Endothelial cell of umbilical vein (primary cell): ENCODE measurements at regions of chr3 and their contacts with region 1.

Region 1: GRCh38 chr3:113626503-113627371 is 69.7 kb downstream of the USF3 start:
- DNase-seq: peak; percentile 64
- H3K4me3 ChIP-seq: no peak overlapping the region
- H3K27ac ChIP-seq: no peak overlapping the region
- H3K4me1 ChIP-seq: peaks cover 4% of the 10 kb centered on the region
- H3K27me3 ChIP-seq: peaks cover 17 to 27% of the 10 kb centered on the region in 2 experiments
- CTCF ChIP-seq: peak; percentile 84 to 90
- POLR2A ChIP-seq: no peak

Region 2: GRCh38 chr3:113035387-113035982 is 591.3 kb before region 1 on chr3:
- CTCF ChIA-PET with region 1: interaction called, 8 read pairs
- POLR2A ChIA-PET with region 1: no interaction called
- dilution Hi-C with region 1: no loop called
- intact Hi-C with region 1: loop called (anchors 5 kb)
- DNase-seq: peak; percentile 47
- H3K4me3 ChIP-seq: no peak overlapping the region
- H3K27ac ChIP-seq: no peak overlapping the region
- H3K4me1 ChIP-seq: no peaks in the 10 kb centered on the region
- H3K27me3 ChIP-seq: no peaks in the 10 kb centered on the region
- CTCF ChIP-seq: peak; percentile 73 to 83
- POLR2A ChIP-seq: no peak

Region 3: DNA sequence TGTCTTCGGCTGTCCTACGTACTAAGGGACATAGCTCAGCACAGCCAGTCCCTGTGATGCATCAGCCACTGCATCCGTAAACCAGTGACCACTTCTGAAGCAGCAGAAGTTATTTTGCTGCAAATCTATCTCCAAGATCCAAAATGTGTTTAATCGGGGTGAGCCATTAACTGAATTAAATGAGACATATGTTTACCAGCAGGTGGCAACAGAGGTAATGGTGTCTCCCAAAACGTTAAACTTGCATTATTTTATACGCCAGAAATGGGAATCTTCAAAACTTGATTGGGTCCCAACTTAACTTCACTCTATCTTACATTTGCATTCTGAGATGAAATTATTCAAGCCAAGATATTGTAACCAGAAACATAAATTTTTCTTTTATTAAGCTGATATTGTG is 490.7 kb before region 1 on chr3:
- CTCF ChIA-PET with region 1: interaction called, 5 read pairs
- POLR2A ChIA-PET with region 1: no interaction called
- dilution Hi-C with region 1: no loop called
- intact Hi-C with region 1: loop called (anchors 1 kb)
- DNase-seq: peak; percentile 20
- H3K4me3 ChIP-seq: no peak overlapping the region
- H3K27ac ChIP-seq: no peak overlapping the region
- H3K4me1 ChIP-seq: no peaks in the 10 kb centered on the region
- H3K27me3 ChIP-seq: no peaks in the 10 kb centered on the region
- CTCF ChIP-seq: peak; percentile 27 to 30
- POLR2A ChIP-seq: no peak

Region 4: GRCh38 chr3:113300596-113300995 is 326.1 kb before region 1 on chr3:
- CTCF ChIA-PET with region 1: no interaction called
- POLR2A ChIA-PET with region 1: no interaction called
- dilution Hi-C with region 1: no loop called
- intact Hi-C with region 1: no loop called
- DNase-seq: no peak
- H3K4me3 ChIP-seq: no peak overlapping the region
- H3K27ac ChIP-seq: no peak overlapping the region
- H3K4me1 ChIP-seq: no peaks in the 10 kb centered on the region
- H3K27me3 ChIP-seq: no peaks in the 10 kb centered on the region
- CTCF ChIP-seq: no peak
- POLR2A ChIP-seq: no peak

Region 5: GRCh38 chr3:113339616-113340244 is 287.0 kb before region 1 on chr3:
- CTCF ChIA-PET with region 1: no interaction called
- POLR2A ChIA-PET with region 1: no interaction called
- dilution Hi-C with region 1: no loop called
- intact Hi-C with region 1: loop called (anchors 10 kb)
- DNase-seq: no peak
- H3K4me3 ChIP-seq: no peak overlapping the region
- H3K27ac ChIP-seq: no peak overlapping the region
- H3K4me1 ChIP-seq: no peaks in the 10 kb centered on the region
- H3K27me3 ChIP-seq: no peaks in the 10 kb centered on the region
- CTCF ChIP-seq: peak in 1 of 2 donors; percentile 7
- POLR2A ChIP-seq: no peak

Region 6: DNA sequence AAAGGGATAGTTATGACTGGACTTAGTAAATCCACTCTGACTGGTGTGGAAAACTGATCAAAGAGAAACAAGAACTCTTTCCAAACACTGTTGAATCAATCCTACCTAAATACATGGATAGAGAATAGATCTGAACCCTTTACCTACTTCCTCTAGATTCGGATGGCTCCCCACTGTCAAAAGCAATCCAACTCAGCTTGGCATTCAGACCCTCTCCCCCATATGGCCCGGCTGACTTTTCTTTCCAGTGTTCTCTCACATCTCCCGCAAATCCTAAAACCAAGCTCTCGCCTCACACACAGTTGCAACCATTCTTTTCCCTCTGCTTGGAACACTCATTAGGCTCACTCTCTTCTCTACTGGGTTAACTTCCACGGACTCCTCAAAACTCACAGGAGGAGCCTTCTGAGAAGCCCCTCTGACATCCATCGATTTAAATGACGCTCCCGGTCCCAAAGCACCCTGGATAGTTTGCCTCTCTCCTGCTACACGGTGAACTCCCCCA is 112.4 kb before region 1 on chr3:
- CTCF ChIA-PET with region 1: interaction called, 12 read pairs
- POLR2A ChIA-PET with region 1: no interaction called
- dilution Hi-C with region 1: no loop called
- intact Hi-C with region 1: no loop called
- DNase-seq: no peak
- H3K4me3 ChIP-seq: peak overlapping the region; percentile 69 to 88 (median 86)
- H3K27ac ChIP-seq: peak overlapping the region; percentile 75
- H3K4me1 ChIP-seq: peaks cover 9% of the 10 kb centered on the region
- H3K27me3 ChIP-seq: peaks cover 11 to 27% of the 10 kb centered on the region in 2 experiments
- CTCF ChIP-seq: no peak
- POLR2A ChIP-seq: no peak

Region 7: GRCh38 chr3:113590983-113591382 is 35.8 kb before region 1 on chr3:
- CTCF ChIA-PET with region 1: no interaction called
- POLR2A ChIA-PET with region 1: no interaction called
- dilution Hi-C with region 1: no loop called
- intact Hi-C with region 1: no loop called
- DNase-seq: no peak
- H3K4me3 ChIP-seq: no peak overlapping the region
- H3K27ac ChIP-seq: no peak overlapping the region
- H3K4me1 ChIP-seq: no peaks in the 10 kb centered on the region
- H3K27me3 ChIP-seq: peaks cover 2 to 13% of the 10 kb centered on the region in 2 experiments
- CTCF ChIP-seq: no peak
- POLR2A ChIP-seq: no peak

Region 8: DNA sequence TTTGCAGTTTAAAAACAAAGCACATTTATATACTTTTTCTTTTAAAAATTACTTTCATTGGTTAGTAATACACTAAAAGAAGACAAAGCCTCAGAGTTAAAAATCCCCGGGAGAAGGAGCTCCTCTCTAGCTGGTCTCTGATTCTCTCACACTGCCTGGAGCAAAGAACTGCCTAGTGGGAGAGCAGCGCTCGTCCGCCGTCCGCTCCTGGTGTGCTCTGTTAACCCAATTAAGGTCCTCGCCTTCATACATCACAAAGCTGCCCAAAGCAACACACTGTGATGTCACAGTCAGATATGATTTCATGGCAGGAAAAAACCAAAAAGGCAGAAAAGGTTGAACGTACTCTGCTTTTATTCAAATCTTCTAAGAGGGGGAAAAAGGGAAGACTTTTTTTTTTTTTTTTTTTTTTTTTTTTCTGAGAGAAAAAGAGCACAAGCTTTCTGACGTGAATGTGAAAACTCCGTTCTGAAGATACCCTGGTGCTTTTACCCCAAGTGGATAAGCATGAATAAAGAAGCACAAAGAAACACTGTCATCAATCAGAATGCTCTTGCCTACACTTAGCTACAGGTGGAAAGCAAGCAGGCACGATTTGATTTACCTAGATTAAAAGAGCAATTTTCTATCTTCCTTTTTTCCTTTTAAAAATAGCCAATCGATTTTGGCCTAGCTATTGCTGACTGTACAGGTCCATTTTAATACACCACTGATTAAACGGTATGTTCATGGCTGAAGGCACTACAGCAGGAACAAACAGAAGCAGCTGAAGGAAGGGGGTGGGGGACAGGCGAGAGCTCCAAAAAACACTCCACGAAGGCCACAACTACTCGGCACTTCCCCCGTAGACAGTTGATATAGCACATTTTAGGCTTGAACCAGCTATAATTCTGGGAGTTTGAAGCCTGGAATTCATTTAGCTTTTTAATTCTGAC is 782.3 kb after region 1 on chr3:
- CTCF ChIA-PET with region 1: no interaction called
- POLR2A ChIA-PET with region 1: no interaction called
- dilution Hi-C with region 1: no loop called
- intact Hi-C with region 1: no loop called
- DNase-seq: no peak
- H3K4me3 ChIP-seq: no peak overlapping the region
- H3K27ac ChIP-seq: no peak overlapping the region
- H3K4me1 ChIP-seq: peaks cover 9% of the 10 kb centered on the region
- H3K27me3 ChIP-seq: no peaks in the 10 kb centered on the region
- CTCF ChIP-seq: no peak
- POLR2A ChIP-seq: no peak